ENCODE measurements at regions of chr14 and their contacts with region 1.

Region 1: DNA sequence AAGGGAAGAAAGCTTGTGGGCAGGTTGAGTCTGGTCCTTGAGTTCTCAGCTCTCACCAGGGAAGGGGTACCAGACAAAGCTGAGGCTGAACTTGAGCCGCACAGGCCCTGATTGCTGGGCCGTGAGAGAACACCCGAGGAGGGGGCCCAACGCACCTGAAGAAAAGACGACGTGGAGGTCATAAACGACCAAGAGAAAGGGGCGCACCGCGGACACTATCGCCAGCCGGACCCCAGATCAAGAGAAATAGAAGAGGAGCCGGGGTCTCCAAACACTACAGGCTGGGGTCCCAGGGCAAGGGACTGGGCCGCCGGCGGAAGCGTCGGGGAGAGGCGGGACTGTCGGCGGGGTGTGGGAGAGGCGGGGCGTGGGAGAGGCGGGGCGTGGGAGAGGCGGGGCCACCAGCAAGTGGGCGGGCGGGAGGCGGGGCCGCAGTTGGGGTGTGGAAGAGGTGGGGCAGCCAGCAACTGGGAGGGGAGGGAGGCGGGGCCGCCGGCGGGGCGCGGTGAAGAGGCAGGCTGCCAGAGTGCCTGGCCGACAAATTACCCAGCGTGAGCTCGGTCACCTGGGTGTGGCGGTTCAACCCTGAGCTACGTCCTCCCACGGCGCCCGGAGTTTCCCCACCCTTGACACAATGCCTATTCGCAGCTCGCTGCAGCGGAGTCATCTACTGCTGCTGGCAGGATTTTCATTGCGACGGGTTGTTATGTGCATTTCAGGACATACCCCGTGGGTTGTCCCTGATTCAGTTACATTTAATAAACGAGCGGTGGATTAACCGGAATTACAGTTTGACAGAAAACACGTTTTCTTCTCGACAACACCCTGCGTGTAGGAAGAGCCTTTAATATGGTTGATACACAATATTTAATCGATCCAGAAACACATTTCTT is 15.5 kb upstream of the NEMF start:
- DNase-seq: peak; percentile 98
- H3K4me3 ChIP-seq: peak overlapping the region; percentile 53
- H3K4me1 ChIP-seq: peaks cover 4% of the 10 kb centered on the region
- H3K27me3 ChIP-seq: no peaks in the 10 kb centered on the region

Region 2: GRCh38 chr14:50099335-50099734 is 231.3 kb after region 1 on chr14:
- in situ Hi-C with region 1: loop called (anchors 5 kb)
- DNase-seq: no peak
- H3K4me3 ChIP-seq: no peak overlapping the region
- H3K4me1 ChIP-seq: no peaks in the 10 kb centered on the region
- H3K27me3 ChIP-seq: no peaks in the 10 kb centered on the region

Region 3: DNA sequence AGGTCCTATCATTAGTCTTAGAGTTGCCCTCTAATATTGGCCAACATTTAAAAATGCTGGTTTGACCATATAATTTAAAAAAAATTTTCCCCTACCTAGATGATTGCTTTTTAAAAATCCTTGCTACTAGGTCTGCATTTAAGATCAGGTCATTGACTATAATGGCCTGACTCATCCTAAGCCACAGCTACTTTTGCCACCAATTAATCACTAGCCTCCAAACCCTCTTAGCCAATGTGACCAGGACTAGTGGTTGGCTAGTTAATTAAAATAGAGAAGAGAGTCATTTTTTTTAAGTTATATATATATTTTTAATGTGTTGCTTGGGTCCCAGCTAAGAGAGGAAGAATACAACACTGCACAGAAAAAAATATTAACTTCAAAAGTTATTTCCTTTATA is 305.8 kb after region 1 on chr14:
- in situ Hi-C with region 1: no loop called
- DNase-seq: no peak
- H3K4me3 ChIP-seq: no peak overlapping the region
- H3K4me1 ChIP-seq: no peaks in the 10 kb centered on the region
- H3K27me3 ChIP-seq: no peaks in the 10 kb centered on the region

Measured in HAP-1 (cell line).